CD14-positive monocyte (primary cell): ENCODE measurements at regions of chr15 and their contacts with region 1.

Region 1: GRCh38 chr15:70271422-70272088 is 173.8 kb upstream of the TLE3 start:
- DNase-seq: peak; percentile 89 to 97 (median 97)
- H3K4me3 ChIP-seq: no peak overlapping the region
- H3K4me3 Mint-ChIP-seq: peak overlapping the region; percentile 9 to 64
- H3K27ac ChIP-seq: peak overlapping the region in 1 of 2 donors; percentile 62
- H3K27ac Mint-ChIP-seq: peak overlapping the region; percentile 46 to 88 (median 86)
- H3K4me1 ChIP-seq: peaks cover 52 to 56% of the 10 kb centered on the region in 2 donors
- H3K4me1 Mint-ChIP-seq: peaks cover 56% of the 10 kb centered on the region
- H3K27me3 ChIP-seq: peaks cover 0 to 3% of the 10 kb centered on the region in 2 donors
- H3K27me3 Mint-ChIP-seq: peaks cover 11 to 13% (median 11%) of the 10 kb centered on the region in 3 donors
- CTCF ChIP-seq: no peak

Region 2: DNA sequence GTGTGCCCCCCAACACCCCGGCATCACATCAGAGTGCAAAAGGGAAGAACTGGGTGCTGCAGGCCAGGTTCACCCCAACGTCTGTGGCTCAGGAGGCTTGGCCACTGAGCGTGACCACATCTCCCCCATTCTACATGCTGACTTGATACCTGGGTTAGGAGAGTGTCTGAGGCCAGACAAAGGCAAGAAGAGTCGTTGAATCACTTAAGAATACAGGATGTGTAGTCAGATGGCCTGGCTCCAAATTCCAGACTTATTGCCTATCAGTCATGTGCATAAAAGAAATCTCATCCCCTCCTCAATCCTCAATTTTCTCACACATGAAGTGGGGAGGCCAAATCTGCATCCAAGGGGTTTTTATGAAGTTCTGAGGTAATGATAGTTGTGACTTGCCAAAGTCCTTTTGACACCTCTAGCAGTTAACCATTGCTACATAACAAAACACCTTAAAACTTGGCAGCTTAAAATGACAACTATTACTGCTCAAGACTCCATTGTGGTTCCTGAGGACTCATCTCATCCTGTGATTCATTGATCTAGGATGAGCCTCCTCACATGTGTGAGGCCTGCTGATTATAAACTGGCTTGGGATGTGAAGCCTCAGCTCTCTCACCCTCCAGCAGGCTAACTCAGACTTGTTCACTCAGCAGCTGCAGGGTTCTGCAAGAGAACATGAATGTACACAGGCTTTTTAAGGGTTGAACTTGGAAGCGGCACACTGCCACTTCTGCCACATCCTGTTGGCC is 35.0 kb before region 1 on chr15:
- intact Hi-C with region 1: loop called (anchors 5 kb)
- DNase-seq: peak; percentile 26 to 41 (median 29)
- H3K4me3 ChIP-seq: no peak overlapping the region
- H3K4me3 Mint-ChIP-seq: no peak overlapping the region
- H3K27ac ChIP-seq: no peak overlapping the region
- H3K27ac Mint-ChIP-seq: peak overlapping the region in 1 of 7 donors; percentile 23
- H3K4me1 ChIP-seq: peaks cover 12 to 14% of the 10 kb centered on the region in 2 donors
- H3K4me1 Mint-ChIP-seq: peaks cover 23% of the 10 kb centered on the region
- H3K27me3 ChIP-seq: peaks cover 0 to 2% of the 10 kb centered on the region in 2 donors
- H3K27me3 Mint-ChIP-seq: peaks cover 2 to 6% (median 5%) of the 10 kb centered on the region in 3 donors
- CTCF ChIP-seq: no peak

Region 3: GRCh38 chr15:70289203-70289955 is 17.8 kb after region 1 on chr15:
- intact Hi-C with region 1: no loop called
- DNase-seq: no peak
- H3K4me3 ChIP-seq: no peak overlapping the region
- H3K4me3 Mint-ChIP-seq: no peak overlapping the region
- H3K27ac ChIP-seq: no peak overlapping the region
- H3K27ac Mint-ChIP-seq: no peak overlapping the region
- H3K4me1 ChIP-seq: peaks cover 0 to 7% of the 10 kb centered on the region in 2 donors
- H3K4me1 Mint-ChIP-seq: peaks cover 12% of the 10 kb centered on the region
- H3K27me3 ChIP-seq: no peaks in the 10 kb centered on the region
- H3K27me3 Mint-ChIP-seq: peaks cover 0 to 8% (median 2%) of the 10 kb centered on the region in 3 donors
- CTCF ChIP-seq: no peak

Region 4: GRCh38 chr15:70308011-70308734 is 36.6 kb after region 1 on chr15:
- intact Hi-C with region 1: loop called (anchors 5 kb)
- DNase-seq: peak; percentile 85 to 94 (median 92)
- H3K4me3 ChIP-seq: no peak overlapping the region
- H3K4me3 Mint-ChIP-seq: peak overlapping the region in 1 of 2 donors; percentile 78
- H3K27ac ChIP-seq: no peak overlapping the region
- H3K27ac Mint-ChIP-seq: peak overlapping the region; percentile 46 to 91 (median 76)
- H3K4me1 ChIP-seq: peaks cover 11 to 16% of the 10 kb centered on the region in 2 donors
- H3K4me1 Mint-ChIP-seq: peaks cover 10% of the 10 kb centered on the region
- H3K27me3 ChIP-seq: peaks cover 0 to 3% of the 10 kb centered on the region in 2 donors
- H3K27me3 Mint-ChIP-seq: peaks cover 0 to 8% (median 6%) of the 10 kb centered on the region in 3 donors
- CTCF ChIP-seq: no peak

Region 5: DNA sequence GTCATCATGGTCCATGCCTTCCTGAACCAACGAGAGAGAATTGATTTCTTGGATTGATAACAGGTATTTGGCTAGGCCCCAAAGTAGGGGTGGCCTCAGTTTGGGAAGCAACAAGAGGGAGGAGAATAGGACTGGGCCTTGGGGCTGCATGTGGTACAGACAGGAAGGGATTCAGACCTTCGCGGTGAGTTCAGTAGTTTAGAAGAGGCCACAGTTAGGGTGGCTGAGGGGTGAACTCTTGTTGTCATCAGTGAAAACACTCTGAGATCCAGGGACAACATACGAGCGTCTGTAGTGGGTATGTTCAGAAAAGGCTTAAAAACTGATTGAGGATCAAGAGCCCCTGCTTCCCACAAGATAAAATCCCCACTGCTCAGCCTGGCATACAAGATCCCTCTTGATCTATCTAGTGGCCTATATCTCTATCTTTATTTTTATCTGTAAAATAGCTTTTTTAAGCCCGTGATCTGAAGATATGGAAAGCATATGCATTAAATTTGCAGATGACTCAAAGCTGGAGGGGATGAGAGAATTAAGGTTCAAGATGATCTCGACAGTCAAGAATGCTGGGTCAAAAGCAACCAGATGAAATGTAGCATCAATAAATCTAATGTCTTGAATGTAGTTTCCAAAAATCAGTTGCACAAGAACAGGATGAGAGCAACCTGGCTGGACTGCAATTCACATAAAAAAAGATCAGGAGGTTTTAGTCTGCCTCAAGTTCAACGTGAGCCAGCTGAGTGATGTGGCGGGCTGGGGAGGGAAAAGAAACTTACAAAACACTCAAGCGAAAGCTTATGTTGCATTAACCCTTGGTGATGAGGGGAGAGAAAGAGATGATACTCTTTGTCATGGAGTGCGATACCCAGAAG is 47.3 kb after region 1 on chr15:
- intact Hi-C with region 1: no loop called
- DNase-seq: no peak
- H3K4me3 ChIP-seq: no peak overlapping the region
- H3K4me3 Mint-ChIP-seq: no peak overlapping the region
- H3K27ac ChIP-seq: no peak overlapping the region
- H3K27ac Mint-ChIP-seq: peak overlapping the region in 2 of 7 donors; percentile 2 to 80
- H3K4me1 ChIP-seq: peaks cover 45 to 47% of the 10 kb centered on the region in 2 donors
- H3K4me1 Mint-ChIP-seq: peaks cover 48% of the 10 kb centered on the region
- H3K27me3 ChIP-seq: peaks cover 0 to 3% of the 10 kb centered on the region in 2 donors
- H3K27me3 Mint-ChIP-seq: peaks cover 1 to 10% (median 1%) of the 10 kb centered on the region in 3 donors
- CTCF ChIP-seq: no peak